ENCODE measurements at regions of chr6 and their contacts with region 1.

Region 1: GRCh38 chr6:28747631-28748157 is 176.1 kb downstream of the TRIM27 start:
- H3K4me3 ChIP-seq: peak overlapping the region; percentile 53
- H3K27ac ChIP-seq: no peak overlapping the region
- H3K4me1 ChIP-seq: no peaks in the 10 kb centered on the region
- CTCF ChIP-seq: no peak

Region 2: DNA sequence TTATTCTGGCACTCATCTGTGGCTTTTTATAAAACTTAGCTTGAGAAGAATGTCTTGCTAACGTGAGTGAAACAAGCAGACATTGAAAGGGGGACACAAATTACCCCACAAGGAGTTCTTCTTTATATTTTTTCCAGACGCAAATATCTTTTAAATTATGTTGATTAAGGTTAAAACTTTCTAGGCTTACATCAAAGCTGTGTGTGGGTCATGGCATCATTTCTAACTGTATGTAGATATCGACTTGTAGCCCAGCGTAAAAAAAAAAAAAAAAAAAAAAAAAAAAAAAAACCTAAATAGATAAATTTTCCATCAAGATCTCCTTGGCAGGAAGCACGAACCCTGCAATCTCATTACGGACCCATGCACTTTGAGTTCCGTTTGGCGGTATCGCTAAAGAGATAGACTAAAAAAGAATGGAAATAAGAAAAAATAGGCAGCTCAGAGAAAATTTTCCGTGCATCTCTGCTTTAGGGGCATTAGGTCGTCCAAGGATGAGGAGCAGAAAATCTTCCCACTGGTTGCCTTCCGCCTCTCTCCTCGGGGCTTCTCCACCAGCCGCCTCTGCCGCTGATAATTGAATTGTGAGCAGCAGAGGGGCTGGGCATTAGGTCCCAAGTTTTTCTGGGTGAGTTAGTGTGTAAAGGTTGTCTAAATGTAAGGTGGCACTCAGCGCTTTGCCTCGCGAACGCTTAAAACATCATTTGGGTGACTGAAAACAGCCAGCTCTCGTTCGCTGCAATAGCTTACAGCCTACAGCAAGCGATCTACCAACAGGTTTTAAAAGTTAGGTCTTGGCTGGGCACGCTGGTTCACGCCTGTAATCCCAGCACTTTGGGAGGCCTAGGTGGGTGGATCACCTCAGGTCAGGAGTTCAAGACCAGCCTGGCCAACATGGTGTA is 17.9 kb before region 1 on chr6:
- CTCF ChIA-PET with region 1: interaction called, 5 read pairs
- POLR2A ChIA-PET with region 1: interaction called, 11 read pairs
- H3K4me3 ChIP-seq: peak overlapping the region; percentile 88
- H3K27ac ChIP-seq: no peak overlapping the region
- H3K4me1 ChIP-seq: no peaks in the 10 kb centered on the region
- CTCF ChIP-seq: no peak

Region 3: GRCh38 chr6:28758046-28758817 is 10.5 kb after region 1 on chr6:
- CTCF ChIA-PET with region 1: interaction called, 4 read pairs
- POLR2A ChIA-PET with region 1: interaction called, 21 read pairs
- H3K4me3 ChIP-seq: peak overlapping the region; percentile 48
- H3K27ac ChIP-seq: peak overlapping the region; percentile 82
- H3K4me1 ChIP-seq: no peaks in the 10 kb centered on the region
- CTCF ChIP-seq: no peak

Measured in HEK293 (cell line).